GM13977 (cell line): ENCODE measurements at regions of chr19 and their contacts with region 1.

Region 1: DNA sequence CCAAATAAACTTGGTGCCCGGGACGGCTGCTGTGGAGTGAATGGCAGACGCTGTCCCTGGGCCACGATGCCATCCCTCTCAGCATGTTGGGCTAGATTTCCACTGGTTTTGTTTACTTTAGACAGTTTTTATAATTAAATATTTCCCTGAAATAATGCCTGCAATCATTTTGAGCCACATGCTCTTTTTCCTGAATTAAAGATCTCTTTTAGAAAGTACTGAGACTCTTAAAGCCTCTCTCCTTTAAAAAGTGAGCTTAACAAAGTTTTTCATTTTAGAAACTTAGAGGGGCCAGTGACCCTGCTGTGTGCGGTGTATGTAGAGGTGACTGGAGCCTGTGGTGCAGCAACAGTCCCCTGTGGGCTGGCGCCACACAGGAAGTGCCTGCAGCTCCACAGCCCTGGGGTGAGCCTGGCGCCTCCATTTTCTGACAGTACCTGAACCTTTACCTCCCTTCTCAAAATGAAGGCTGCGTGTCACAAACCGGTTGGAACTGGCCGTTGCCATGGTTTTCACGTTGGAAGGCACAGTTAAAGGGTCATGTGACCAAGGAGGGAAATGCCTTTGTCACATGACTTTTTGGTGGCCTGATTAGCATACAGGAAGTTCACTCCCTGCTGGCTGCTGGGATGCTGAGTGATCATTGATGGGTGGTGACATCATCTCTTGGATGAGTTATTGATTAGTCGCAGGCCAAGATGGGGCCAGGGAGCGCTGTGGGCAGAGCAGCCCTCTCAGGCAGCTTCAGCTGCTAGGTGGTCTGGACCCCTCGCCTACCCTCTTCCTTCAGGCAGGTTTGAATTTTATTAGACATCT is 26.3 kb downstream of the TSSK6 start:
- DNase-seq: peak; percentile 80
- CTCF ChIP-seq: no peak

Region 2: DNA sequence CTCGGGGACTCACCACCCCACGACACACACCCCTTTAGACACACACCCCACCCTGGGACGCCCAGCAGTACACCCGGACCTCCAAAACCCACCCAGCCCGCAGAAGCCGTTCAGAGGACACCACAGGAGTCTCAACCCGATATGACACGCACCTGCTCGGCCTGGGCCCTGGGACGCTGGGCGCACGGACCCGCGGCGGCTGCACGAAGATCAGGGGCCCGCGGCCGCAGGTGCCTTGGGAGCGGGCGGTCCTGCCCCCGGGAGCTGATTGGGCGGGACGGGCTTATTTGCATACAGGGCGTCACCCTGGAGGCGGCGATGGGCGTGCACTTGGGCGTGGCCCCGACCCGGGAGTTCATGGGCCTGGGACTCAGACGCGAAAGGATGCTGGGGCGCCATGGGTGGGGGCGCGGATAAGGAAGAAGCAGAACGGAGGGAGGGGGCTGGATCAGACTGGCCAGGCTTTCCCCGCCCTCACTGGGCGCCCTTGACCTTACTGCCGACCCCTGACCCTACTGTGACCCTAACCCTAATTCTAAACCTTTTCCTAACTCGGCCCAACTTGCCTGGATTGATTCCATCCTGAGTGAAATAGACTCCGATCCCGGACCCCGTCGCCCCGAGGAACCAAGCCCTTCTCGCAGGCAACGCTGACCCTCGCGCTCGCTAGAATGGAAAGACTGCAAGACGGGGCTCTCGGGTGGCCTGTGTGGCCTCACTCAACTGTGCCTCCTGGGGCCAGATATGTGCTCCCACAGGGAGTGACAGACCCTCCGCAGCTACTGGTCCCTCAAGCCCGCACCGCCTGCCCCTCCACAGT is 318.8 kb before region 1 on chr19 and contains the start of gene MEF2B:
- in situ Hi-C with region 1: loop called (anchors 25 kb)
- DNase-seq: peak; percentile 96
- CTCF ChIP-seq: no peak

Region 3: DNA sequence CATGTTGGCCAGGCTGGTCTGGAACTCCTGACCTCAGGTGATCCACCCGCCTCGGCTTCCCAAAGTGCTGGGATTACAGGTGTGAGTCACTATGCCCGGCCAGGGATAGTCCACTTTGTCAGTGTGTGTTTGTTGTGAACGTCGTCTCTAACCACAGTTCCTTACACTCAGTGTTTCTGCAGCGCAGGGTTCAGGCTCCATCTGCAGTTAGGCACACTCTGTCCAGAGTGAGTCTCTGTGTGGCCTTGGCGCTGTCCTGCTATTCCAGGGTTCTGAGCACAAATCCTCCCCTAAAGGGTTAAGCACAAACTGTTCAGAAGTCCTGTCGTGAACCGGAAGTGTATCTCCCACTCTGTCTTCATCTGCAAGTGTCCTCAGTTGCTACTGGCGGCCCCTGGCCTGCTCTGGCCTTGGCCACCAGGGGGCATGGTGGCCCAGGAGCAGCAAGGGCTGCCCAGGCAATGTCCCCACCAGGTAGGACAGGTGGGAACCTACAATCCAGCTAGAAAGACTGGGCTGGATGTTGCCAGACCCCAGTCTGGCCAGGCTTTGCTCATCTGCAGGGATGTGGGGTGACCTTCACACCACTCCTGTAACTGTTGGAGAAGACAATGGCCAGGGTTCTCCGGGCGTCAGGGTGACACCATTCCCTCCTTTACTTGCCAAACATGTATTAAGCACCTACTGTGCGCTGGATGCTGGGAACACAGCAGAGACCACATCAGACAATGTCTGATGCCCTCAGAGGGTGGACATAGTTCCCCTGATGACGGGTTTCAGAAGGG is 122.3 kb before region 1 on chr19:
- in situ Hi-C with region 1: loop called (anchors 5 kb)
- DNase-seq: peak; percentile 75
- CTCF ChIP-seq: peak; percentile 99

Region 4: DNA sequence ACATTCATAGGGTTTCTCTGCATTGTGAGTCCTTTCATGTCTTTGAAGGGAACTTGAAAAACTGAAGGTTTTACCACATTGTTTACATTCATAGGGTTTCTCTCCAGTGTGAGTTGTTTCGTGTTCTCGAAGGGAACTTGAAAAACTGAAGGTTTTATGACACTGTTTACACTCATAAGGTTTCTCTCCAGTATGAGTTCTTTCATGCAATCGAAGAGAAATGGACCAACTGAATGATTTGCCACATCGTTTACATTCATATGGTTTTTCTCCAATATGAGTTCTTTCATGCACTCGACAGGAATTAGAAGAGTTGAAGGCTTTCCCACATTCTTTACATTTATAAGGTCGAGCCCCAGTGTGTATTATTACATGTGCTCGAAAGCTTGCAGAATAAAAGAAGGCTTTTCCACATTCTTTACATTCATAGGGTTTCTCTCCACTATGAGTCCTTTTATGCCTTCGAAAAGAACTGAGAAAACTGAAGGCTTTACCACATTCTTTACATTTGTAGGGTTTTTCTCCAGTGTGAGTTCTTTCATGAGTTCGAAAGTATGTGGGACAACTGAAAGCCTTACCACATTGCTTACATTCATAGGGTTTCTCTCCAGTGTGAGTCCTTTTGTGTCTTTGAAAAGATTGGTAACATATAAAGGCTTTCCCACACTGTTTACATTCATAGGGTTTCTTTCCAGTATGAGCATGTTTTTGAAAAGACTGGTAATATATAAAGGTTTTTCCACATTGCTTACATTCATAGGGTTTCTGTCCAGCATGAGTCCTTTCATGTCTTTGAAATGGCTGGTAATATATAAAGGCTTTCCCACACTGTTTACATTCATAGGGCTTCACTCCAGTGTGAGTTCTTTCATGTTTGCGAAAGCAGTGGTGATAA is 223.1 kb after region 1 on chr19:
- in situ Hi-C with region 1: no loop called
- DNase-seq: no peak
- CTCF ChIP-seq: no peak